Activated CD8-positive, alpha-beta T cell treated with anti-CD3 and anti-CD28 coated beads for 36 hours (primary cell): ENCODE measurements at regions of chr2 and their contacts with region 1.

Region 1: GRCh38 chr2:161273038-161273760 is 35.0 kb upstream of the PSMD14 start:
- DNase-seq: peak; percentile 34
- ATAC-seq: peak; percentile 73
- H3K4me3 Mint-ChIP-seq: no peak overlapping the region
- H3K27ac Mint-ChIP-seq: no peak overlapping the region
- H3K4me1 Mint-ChIP-seq: no peaks in the 10 kb centered on the region
- H3K27me3 Mint-ChIP-seq: peaks cover 4% of the 10 kb centered on the region
- CTCF ChIP-seq: peak; percentile 90

Region 2: GRCh38 chr2:161077367-161078210 is 195.6 kb before region 1 on chr2:
- CTCF ChIA-PET with region 1: interaction called, 3 read pairs
- POLR2A ChIA-PET with region 1: no interaction called
- intact Hi-C with region 1: loop called (anchors 10 kb)
- DNase-seq: peak; percentile 92
- ATAC-seq: peak; percentile 85
- H3K4me3 Mint-ChIP-seq: peak overlapping the region; percentile 25
- H3K27ac Mint-ChIP-seq: peak overlapping the region; percentile 87
- H3K4me1 Mint-ChIP-seq: peaks cover 47% of the 10 kb centered on the region
- H3K27me3 Mint-ChIP-seq: no peaks in the 10 kb centered on the region
- CTCF ChIP-seq: no peak

Region 3: GRCh38 chr2:161223139-161223732 is 50.0 kb before region 1 on chr2:
- CTCF ChIA-PET with region 1: interaction called, 30 read pairs
- POLR2A ChIA-PET with region 1: no interaction called
- intact Hi-C with region 1: loop called (anchors 1 kb)
- DNase-seq: no peak
- ATAC-seq: peak; percentile 75
- H3K4me3 Mint-ChIP-seq: no peak overlapping the region
- H3K27ac Mint-ChIP-seq: no peak overlapping the region
- H3K4me1 Mint-ChIP-seq: peaks cover 4% of the 10 kb centered on the region
- H3K27me3 Mint-ChIP-seq: no peaks in the 10 kb centered on the region
- CTCF ChIP-seq: peak; percentile 86

Region 4: GRCh38 chr2:161238560-161239325 is 34.5 kb before region 1 on chr2:
- CTCF ChIA-PET with region 1: interaction called, 6 read pairs
- POLR2A ChIA-PET with region 1: no interaction called
- intact Hi-C with region 1: loop called (anchors 5 kb)
- DNase-seq: peak; percentile 76
- ATAC-seq: peak; percentile 60
- H3K4me3 Mint-ChIP-seq: peak overlapping the region; percentile 84
- H3K27ac Mint-ChIP-seq: peak overlapping the region; percentile 74
- H3K4me1 Mint-ChIP-seq: peaks cover 42% of the 10 kb centered on the region
- H3K27me3 Mint-ChIP-seq: no peaks in the 10 kb centered on the region
- CTCF ChIP-seq: no peak

Region 5: DNA sequence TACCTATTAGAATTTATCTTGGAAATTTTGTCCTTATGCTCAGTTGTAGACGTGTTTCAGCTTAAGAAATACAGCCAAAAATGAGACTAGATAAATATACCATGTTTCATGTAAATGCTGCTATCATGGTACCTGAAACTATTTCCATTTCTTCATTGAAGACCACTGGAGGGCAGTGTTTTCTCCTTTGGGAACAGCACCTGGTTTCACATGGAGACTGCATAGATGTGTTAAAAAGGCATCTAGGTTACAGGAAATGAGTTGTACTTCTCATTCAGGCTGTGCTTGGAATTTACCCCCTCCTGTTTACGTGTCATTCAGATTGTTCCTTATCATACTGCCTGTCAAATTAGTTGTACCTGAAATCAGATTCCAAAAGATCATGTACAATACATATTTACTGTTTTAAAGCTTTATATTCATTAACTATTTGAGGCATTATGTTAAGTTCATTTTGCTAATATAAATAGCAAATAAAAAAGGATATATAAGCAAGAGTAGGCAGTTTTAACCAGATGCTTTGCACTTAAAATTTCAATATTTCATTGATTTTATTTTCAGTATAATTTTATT is 22.2 kb before region 1 on chr2:
- CTCF ChIA-PET with region 1: interaction called, 21 read pairs
- POLR2A ChIA-PET with region 1: no interaction called
- intact Hi-C with region 1: no loop called
- DNase-seq: no peak
- ATAC-seq: peak; percentile 51
- H3K4me3 Mint-ChIP-seq: no peak overlapping the region
- H3K27ac Mint-ChIP-seq: no peak overlapping the region
- H3K4me1 Mint-ChIP-seq: peaks cover 20% of the 10 kb centered on the region
- H3K27me3 Mint-ChIP-seq: peaks cover 4% of the 10 kb centered on the region
- CTCF ChIP-seq: peak; percentile 38